Gastrocnemius medialis (tissue), 4 donors: ENCODE measurements at regions of chr3 and their contacts with region 1.

Region 1: GRCh38 chr3:64815195-64815631 is 127.4 kb upstream of the ADAMTS9 start:
- DNase-seq: no peak
- ATAC-seq: peak; percentile 34 to 52
- H3K4me3 ChIP-seq: no peak overlapping the region
- H3K27ac ChIP-seq: peak overlapping the region; percentile 40 to 80 (median 67)
- H3K4me1 ChIP-seq: peaks cover 24 to 33% of the 10 kb centered on the region in 2 donors
- H3K27me3 ChIP-seq: no peaks in the 10 kb centered on the region
- CTCF ChIP-seq: no peak
- POLR2A ChIP-seq: no peak

Region 2: DNA sequence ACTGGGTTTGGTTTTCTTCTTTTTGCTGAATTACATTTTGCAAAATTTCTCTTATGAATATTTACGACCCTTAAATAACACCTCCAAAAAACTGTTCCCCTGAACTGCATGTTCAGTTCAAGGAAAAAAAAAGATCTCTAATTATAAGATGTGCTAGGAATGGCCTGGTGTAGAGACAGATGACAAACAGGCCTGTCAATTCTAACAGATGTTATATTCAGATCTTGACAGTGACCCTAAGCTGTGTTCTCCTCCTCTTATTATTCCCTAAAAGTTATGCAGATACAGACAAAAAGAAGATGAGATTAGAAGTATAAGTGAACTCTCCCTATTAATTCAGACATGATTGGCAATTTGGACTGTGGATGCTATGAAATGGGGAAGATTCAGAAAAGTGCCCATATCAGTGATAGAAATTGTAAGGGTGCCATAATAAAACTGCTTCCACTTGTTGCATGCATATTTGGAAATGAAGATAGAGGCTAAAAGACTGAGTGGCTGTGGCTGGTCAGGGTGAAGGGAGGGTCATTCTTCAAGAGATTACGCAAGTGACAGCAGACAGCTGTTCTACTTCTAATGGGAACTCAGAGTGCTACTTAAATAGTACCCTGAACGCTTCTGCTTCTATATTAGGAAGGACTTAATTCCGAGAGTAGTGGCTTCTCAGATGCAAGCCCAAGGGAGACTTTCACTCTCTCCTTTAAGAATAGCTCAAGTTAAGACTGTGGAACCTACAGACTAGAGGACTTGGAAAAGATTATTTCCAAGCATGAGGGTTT is 202.9 kb before region 1 on chr3:
- in situ Hi-C with region 1: no loop called
- intact Hi-C with region 1: no loop called
- DNase-seq: peak; percentile 75 to 76
- ATAC-seq: peak; percentile 98 to 99
- H3K4me3 ChIP-seq: peak overlapping the region; percentile 33 to 41 (median 35)
- H3K27ac ChIP-seq: peak overlapping the region; percentile 82 to 92 (median 88)
- H3K4me1 ChIP-seq: peaks cover 51 to 68% of the 10 kb centered on the region in 2 donors
- H3K27me3 ChIP-seq: no peaks in the 10 kb centered on the region
- CTCF ChIP-seq: no peak
- POLR2A ChIP-seq: peak; percentile 12 to 56

Region 3: DNA sequence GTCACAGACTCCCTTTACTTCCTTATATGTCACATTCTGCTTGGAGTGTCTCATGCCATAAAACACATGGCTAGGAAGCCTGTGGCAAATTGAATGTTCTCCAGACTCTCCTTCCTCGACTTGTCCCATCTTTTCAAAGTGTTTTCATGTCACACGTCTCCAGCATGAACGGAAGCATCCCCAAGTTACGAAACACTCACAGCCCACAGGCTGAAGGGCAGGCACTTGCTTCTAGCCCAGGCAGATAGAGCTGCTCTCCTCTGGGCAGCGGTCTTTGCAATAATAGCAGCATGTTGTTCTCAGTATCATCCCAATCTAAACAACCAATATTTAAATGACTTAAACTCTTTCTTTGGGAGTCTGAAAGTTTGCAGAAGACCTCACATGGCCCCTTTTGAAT is 42.1 kb before region 1 on chr3:
- in situ Hi-C with region 1: no loop called
- intact Hi-C with region 1: loop called (anchors 5 kb)
- DNase-seq: no peak
- ATAC-seq: no peak
- H3K4me3 ChIP-seq: no peak overlapping the region
- H3K27ac ChIP-seq: no peak overlapping the region
- H3K4me1 ChIP-seq: no peaks in the 10 kb centered on the region
- H3K27me3 ChIP-seq: no peaks in the 10 kb centered on the region
- CTCF ChIP-seq: no peak
- POLR2A ChIP-seq: no peak